Mucosa of descending colon (tissue), 3 donors: ENCODE measurements at regions of chr2 and their contacts with region 1.

Region 1: DNA sequence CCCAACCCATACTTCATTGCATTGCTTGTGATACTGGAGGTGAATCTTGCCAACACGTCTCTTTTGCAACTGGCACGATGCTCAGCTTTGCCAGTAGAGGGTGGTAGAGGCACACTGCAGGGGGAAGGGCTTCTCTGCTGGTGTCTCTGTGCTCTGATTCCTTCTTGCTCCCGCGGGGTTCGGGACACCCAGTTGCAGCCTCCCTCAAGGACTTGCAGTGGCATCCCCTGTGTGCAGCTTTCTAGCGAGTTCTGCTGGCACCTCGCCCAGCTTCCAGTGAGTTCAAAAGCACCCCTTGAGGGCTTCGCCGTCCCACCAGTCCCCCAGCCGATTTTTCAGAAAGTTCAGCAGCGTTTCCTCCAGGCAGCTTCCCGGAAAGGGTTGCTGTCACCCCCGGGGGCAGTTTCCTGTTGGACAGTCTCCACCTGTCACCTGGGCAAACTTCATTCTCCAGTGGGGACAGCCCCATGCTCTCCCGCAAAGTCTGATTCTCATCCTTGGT is 35.3 kb upstream of the EN1 start:
- DNase-seq: peak; percentile 70 to 81 (median 72)
- ATAC-seq: peak; percentile 97
- H3K4me3 ChIP-seq: no peak overlapping the region
- H3K4me1 ChIP-seq: no peaks in the 10 kb centered on the region
- CTCF ChIP-seq: peak; percentile 87

Region 2: GRCh38 chr2:118645891-118646290 is 236.9 kb before region 1 on chr2:
- intact Hi-C with region 1: no loop called
- DNase-seq: no peak
- ATAC-seq: no peak
- H3K4me3 ChIP-seq: no peak overlapping the region
- H3K4me1 ChIP-seq: no peaks in the 10 kb centered on the region
- CTCF ChIP-seq: no peak

Region 3: DNA sequence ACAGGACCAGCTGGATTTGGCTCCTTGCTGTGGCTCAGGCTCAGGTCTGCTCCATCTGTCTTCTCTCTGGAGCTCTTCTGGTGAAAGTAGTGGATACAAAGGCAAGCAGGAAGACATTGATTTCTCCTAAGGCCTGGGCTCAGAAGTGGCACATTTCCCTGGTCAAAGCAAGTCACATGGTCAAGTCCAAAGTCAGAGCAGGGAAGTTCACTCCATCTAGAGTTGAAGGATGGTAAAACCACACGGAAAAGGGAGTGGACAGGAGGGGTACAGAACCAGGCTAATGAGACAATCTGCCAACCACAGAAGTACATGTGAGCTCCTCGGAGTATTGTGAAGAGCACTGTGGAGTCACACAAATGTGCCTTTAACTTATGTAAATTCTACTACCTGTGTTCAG is 125.3 kb after region 1 on chr2:
- intact Hi-C with region 1: loop called in 1 of 2 experiments (anchors 2 kb)
- DNase-seq: peak in 1 of 3 donors; percentile 28
- ATAC-seq: peak; percentile 80
- H3K4me3 ChIP-seq: no peak overlapping the region
- H3K4me1 ChIP-seq: no peaks in the 10 kb centered on the region
- CTCF ChIP-seq: no peak

Region 4: GRCh38 chr2:119290859-119291587 is 408.3 kb after region 1 on chr2:
- intact Hi-C with region 1: loop called in 1 of 2 experiments (anchors 5 kb)
- DNase-seq: peak in 2 of 3 donors; percentile 81 to 93
- ATAC-seq: peak; percentile 95
- H3K4me3 ChIP-seq: no peak overlapping the region
- H3K4me1 ChIP-seq: no peaks in the 10 kb centered on the region
- CTCF ChIP-seq: peak; percentile 87